ENCODE measurements at regions of chr4 and their contacts with region 1.

Region 1: GRCh38 chr4:12633053-12633651 is 851.0 kb downstream of the RAB28 start:
- DNase-seq: peak; percentile 61
- H3K4me3 ChIP-seq: no peak overlapping the region
- H3K27ac ChIP-seq: no peak overlapping the region
- H3K4me1 ChIP-seq: no peaks in the 10 kb centered on the region
- H3K27me3 ChIP-seq: no peaks in the 10 kb centered on the region
- CTCF ChIP-seq: peak; percentile 92 to 97

Region 2: DNA sequence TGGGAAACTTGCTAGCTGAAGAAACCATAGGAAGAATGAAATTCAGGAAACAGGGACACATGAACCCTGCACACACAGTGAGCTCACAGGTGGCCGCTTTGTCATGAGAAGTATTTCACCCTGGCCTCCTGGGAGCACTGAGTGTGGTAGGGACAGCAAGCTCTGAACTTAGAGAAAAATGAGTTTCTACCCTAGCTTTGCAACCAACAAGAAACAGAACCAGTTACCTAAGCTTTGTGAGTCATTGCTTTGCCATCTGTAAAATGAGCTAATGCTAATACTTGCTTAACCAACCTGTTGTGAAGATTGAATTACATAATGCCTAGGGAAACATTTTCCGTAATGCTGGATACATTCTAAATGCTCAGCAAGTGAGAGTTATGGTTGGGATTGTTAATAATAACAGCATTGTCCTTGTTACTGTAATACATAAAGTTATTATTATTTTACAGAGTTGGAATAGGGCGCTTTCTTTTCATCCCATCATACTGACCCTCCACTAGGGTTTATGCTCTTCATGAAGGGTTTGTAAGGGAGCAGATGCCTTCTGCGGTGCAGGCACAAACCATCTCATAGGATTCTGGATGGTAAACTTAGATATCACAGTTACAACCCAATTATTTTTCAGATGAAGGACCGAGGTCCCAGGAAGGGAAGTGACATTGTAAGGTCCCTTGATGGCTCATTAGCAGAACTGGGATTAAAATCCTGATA is 997.6 kb before region 1 on chr4:
- CTCF ChIA-PET with region 1: no interaction called
- dilution Hi-C with region 1: no loop called
- in situ Hi-C with region 1: no loop called
- intact Hi-C with region 1: loop called (anchors 5 kb)
- DNase-seq: peak; percentile 91
- H3K4me3 ChIP-seq: no peak overlapping the region
- H3K27ac ChIP-seq: peak overlapping the region; percentile 96
- H3K4me1 ChIP-seq: peaks cover 45% of the 10 kb centered on the region
- H3K27me3 ChIP-seq: no peaks in the 10 kb centered on the region
- CTCF ChIP-seq: no peak

Region 3: DNA sequence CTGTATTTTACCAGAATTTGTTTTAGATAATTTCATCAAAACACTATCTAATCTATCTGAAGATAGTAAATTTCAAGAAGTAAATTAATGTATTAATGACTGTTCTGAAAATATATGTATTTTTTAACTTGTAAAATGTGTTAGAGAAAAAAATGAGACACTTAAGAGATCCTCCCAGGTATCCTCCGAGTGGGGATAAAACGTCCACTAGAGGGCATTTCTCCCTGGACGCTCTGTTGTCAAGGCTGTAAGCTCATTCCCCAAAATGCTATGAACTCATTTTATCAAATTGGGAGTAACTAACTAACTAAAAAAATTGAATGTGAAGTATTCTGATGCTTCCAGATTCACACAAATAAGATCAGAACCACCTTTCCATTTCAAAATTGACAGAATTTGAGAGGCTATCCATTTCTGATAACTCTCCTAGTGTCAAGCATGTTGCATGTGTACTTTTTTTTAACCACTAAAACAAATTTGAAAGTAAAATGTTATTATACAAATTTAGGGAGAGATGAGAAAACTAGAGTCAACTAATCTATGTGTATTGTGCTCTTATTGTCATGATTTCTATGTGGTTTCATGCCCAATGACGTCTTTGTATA is 867.2 kb before region 1 on chr4:
- CTCF ChIA-PET with region 1: no interaction called
- dilution Hi-C with region 1: no loop called
- in situ Hi-C with region 1: no loop called
- intact Hi-C with region 1: loop called (anchors 1 kb)
- DNase-seq: peak; percentile 41
- H3K4me3 ChIP-seq: no peak overlapping the region
- H3K27ac ChIP-seq: no peak overlapping the region
- H3K4me1 ChIP-seq: no peaks in the 10 kb centered on the region
- H3K27me3 ChIP-seq: no peaks in the 10 kb centered on the region
- CTCF ChIP-seq: peak; percentile 79 to 80

Region 4: GRCh38 chr4:11805842-11806241 is 827.3 kb before region 1 on chr4:
- CTCF ChIA-PET with region 1: no interaction called
- dilution Hi-C with region 1: no loop called
- in situ Hi-C with region 1: loop called in 1 of 2 experiments (anchors 25 kb)
- intact Hi-C with region 1: loop called (anchors 1 kb)
- DNase-seq: peak; percentile 28
- H3K4me3 ChIP-seq: no peak overlapping the region
- H3K27ac ChIP-seq: no peak overlapping the region
- H3K4me1 ChIP-seq: no peaks in the 10 kb centered on the region
- H3K27me3 ChIP-seq: no peaks in the 10 kb centered on the region
- CTCF ChIP-seq: peak; percentile 55 to 74

Region 5: GRCh38 chr4:11954093-11954492 is 679.1 kb before region 1 on chr4:
- CTCF ChIA-PET with region 1: no interaction called
- dilution Hi-C with region 1: no loop called
- in situ Hi-C with region 1: no loop called
- intact Hi-C with region 1: loop called (anchors 2 kb)
- DNase-seq: peak; percentile 8
- H3K4me3 ChIP-seq: no peak overlapping the region
- H3K27ac ChIP-seq: no peak overlapping the region
- H3K4me1 ChIP-seq: no peaks in the 10 kb centered on the region
- H3K27me3 ChIP-seq: no peaks in the 10 kb centered on the region
- CTCF ChIP-seq: peak; percentile 37 to 60

Region 6: DNA sequence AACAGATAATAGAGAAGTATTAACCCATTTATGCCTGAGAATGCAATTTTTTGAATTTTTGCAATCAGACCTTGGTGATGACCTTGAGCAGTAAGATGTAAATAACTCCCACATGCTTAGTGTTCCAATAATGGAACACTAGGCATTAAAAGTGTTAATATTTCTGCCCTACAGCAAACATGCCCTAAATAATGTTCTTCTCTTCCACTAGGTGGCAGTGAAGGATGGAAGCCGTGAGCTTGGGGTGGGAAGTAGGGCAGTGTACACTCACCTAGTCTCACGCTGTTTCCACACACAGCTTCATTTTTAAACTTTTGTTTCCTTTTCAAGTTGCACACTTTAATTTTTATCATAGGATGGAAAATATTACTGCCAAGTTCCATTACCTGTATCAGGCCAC is 591.3 kb before region 1 on chr4:
- CTCF ChIA-PET with region 1: interaction called, 3 read pairs
- dilution Hi-C with region 1: no loop called
- in situ Hi-C with region 1: no loop called
- intact Hi-C with region 1: loop called (anchors 5 kb)
- DNase-seq: peak; percentile 1
- H3K4me3 ChIP-seq: no peak overlapping the region
- H3K27ac ChIP-seq: no peak overlapping the region
- H3K4me1 ChIP-seq: no peaks in the 10 kb centered on the region
- H3K27me3 ChIP-seq: no peaks in the 10 kb centered on the region
- CTCF ChIP-seq: peak in 1 of 2 donors; percentile 28

Region 7: GRCh38 chr4:12409507-12410190 is 223.5 kb before region 1 on chr4:
- CTCF ChIA-PET with region 1: interaction called, 3 read pairs
- dilution Hi-C with region 1: no loop called
- in situ Hi-C with region 1: no loop called
- intact Hi-C with region 1: loop called (anchors 1 kb)
- DNase-seq: peak; percentile 46
- H3K4me3 ChIP-seq: no peak overlapping the region
- H3K27ac ChIP-seq: no peak overlapping the region
- H3K4me1 ChIP-seq: no peaks in the 10 kb centered on the region
- H3K27me3 ChIP-seq: no peaks in the 10 kb centered on the region
- CTCF ChIP-seq: peak; percentile 18 to 50

Region 8: DNA sequence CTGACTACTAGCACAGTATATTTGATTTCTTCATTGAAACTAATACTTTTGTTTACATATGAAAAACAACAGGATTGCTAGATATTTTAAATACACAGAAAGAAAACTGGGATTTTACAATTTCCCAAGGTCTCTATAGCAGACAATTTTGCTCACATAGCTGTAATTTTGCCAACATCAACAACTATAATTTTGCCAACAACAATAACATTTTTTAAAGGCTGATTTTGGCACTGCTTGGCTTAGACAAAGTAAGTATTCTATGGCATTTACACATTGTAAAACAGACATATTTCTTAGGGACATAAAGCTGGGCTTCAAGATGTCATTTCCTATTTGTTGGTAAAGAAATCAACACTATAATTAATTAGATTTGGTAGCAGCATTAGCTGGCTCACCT is 71.1 kb before region 1 on chr4:
- CTCF ChIA-PET with region 1: no interaction called
- dilution Hi-C with region 1: no loop called
- in situ Hi-C with region 1: no loop called
- intact Hi-C with region 1: no loop called
- DNase-seq: no peak
- H3K4me3 ChIP-seq: no peak overlapping the region
- H3K27ac ChIP-seq: no peak overlapping the region
- H3K4me1 ChIP-seq: no peaks in the 10 kb centered on the region
- H3K27me3 ChIP-seq: no peaks in the 10 kb centered on the region
- CTCF ChIP-seq: no peak

Region 9: DNA sequence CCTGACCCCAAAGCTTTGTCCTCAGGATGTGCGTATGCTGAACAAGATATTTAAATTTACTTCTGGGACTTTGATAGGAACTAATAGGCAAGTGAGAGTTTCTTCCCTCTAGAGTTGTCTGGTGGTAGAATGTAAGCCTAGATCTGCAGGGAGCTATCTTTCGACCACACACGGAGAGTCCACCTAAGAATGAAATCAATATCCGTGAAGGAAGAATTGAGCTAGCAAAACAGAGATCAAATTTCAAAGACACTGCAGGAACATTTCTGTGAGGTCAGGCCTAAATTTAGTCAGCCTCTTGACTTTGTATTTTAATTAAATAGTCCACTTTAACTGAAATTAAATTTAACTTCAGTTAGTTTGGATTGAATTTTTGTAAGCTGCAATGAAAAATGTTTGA is 20.3 kb before region 1 on chr4:
- CTCF ChIA-PET with region 1: no interaction called
- dilution Hi-C with region 1: no loop called
- in situ Hi-C with region 1: no loop called
- intact Hi-C with region 1: no loop called
- DNase-seq: no peak
- H3K4me3 ChIP-seq: no peak overlapping the region
- H3K27ac ChIP-seq: no peak overlapping the region
- H3K4me1 ChIP-seq: no peaks in the 10 kb centered on the region
- H3K27me3 ChIP-seq: no peaks in the 10 kb centered on the region
- CTCF ChIP-seq: no peak

Measured in mammary epithelial cell (primary cell).